ENCODE measurements at regions of chr12 and their contacts with region 1.

Region 1: DNA sequence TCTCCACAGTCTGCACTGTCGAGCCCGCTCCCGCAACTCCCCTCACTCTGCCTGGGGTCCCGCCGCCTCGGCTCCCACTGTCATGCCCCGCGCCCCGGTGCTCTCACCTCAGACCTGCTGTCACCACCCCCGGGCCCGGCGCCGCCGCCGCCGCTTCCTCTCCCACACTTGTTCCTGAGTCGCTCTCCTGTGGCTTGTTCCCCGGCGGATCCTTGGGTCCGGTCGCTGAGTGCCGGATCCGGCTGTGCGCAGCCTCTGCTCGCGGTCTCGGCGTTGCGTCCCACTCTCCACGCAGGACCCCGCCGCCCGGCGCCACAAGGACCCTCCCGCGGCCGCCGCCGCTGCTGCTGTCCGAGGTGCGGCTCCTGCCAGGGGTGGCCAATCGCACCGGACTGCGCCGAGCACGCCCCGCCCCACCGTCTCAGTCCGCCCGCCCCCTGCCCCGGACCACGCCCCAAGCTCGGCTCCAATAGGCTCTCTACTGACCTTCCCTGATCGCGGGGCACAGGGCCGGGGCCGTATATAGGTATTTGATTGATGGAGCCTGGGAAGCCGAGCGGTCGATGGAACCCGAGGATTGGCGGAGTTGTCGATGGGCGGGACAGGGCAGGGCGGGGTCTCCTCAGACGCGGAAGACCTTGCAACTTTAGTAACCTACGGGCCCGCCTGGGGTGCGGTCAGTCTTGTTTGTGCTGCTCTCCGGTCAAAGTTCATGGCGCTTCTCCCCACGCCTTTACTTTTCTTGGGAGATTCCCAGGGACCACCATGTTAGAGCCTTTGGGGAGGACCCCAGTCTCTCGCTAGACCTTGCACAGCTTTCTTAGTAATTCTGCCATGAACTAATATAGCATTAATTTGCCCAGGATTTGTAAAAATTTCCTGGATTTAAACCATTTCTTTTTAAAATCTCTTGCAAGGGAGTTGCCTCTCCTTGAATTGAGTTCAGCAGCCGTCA is at the start of gene TAOK3:
- DNase-seq: peak; percentile 98
- H3K4me3 Mint-ChIP-seq: peak within 1 kb of the TSS; percentile 98
- H3K27ac Mint-ChIP-seq: peak within 1 kb of the TSS; percentile 99
- H3K4me1 Mint-ChIP-seq: peaks cover 14% of the 10 kb centered on the region
- H3K27me3 Mint-ChIP-seq: no peaks in the 10 kb centered on the region
- CTCF ChIP-seq: no peak
- total RNA-seq, gene TAOK3: 24.8 and 28.6 TPM in 2 replicates

Region 2: DNA sequence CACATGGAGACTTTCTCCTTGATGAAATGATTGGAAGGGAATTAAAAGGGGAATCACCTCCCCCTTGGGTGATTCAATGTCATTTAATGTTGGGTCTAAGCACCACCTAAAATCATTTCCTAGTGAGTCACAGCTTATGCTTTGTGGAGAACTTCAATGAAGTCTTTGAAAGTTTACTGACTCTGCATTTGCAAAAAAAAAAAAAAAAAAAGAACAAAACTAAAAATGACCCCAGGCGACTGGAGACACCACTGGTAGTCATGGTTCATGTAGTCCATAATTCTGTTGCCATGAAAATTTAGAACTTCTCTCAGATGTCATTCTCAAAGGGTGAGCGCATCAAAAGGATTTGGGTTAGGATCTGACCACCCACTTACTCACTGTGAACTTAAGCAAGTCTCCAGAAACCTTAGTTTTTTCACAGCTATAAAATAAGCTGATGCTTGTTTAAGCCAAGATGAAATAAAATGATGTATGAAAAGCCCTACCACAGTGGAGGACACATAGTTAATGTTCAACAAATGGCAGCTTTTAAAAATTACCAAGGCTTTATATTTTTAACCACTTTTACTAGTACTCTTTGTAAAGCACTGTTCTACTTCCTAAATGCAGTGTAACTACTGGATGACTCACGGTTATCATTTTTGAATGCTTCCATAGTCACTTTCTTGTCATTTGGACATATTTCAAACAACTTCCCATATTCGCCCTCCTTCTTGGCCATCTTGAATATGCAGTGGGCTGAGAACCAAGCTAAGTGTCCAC is 385.9 kb before region 1 on chr12:
- CTCF ChIA-PET with region 1: no interaction called
- POLR2A ChIA-PET with region 1: no interaction called
- intact Hi-C with region 1: no loop called
- DNase-seq: peak; percentile 54
- H3K4me3 Mint-ChIP-seq: no peak overlapping the region
- H3K27ac Mint-ChIP-seq: no peak overlapping the region
- H3K4me1 Mint-ChIP-seq: no peaks in the 10 kb centered on the region
- H3K27me3 Mint-ChIP-seq: no peaks in the 10 kb centered on the region
- CTCF ChIP-seq: no peak

Region 3: GRCh38 chr12:118109088-118109487 is 263.7 kb before region 1 on chr12:
- CTCF ChIA-PET with region 1: interaction called, 10 read pairs
- POLR2A ChIA-PET with region 1: interaction called, 3 read pairs
- intact Hi-C with region 1: no loop called
- DNase-seq: no peak
- H3K4me3 Mint-ChIP-seq: no peak overlapping the region
- H3K27ac Mint-ChIP-seq: no peak overlapping the region
- H3K4me1 Mint-ChIP-seq: no peaks in the 10 kb centered on the region
- H3K27me3 Mint-ChIP-seq: no peaks in the 10 kb centered on the region
- CTCF ChIP-seq: no peak

Region 4: DNA sequence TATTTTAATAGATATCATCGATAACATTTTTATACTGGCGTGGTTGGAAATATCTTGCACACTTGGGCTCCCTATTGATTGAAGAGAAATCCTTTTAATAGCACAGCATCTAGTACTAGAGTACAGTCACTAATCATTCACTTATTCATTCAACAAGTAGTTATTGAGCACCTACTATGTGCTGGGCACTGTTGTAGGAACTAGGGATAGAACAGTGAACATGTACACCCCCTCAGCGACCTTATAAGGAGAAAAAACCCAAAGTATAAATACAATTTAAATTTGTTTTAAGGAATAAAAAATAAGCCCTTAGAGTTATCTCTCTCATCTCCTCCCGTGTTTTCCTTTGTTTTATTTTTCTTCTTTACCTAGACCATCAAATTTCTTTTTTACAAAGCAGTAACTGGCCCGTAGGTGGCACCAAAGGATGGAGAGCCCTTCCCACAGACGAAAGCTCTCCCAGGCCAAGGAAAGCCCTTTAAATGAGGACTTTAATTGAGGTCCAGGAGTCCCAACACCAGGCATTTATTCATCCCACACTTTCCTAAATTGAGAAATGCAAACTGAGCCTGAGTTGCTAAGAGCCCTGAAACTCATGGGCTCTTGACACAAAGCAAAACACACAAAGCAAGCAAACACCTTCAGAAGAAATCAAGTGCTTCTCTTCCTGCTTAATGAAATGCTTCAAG is 207.9 kb before region 1 on chr12:
- CTCF ChIA-PET with region 1: interaction called, 138 read pairs
- POLR2A ChIA-PET with region 1: interaction called, 22 read pairs
- intact Hi-C with region 1: loop called (anchors 1 kb)
- DNase-seq: peak; percentile 40
- H3K4me3 Mint-ChIP-seq: no peak overlapping the region
- H3K27ac Mint-ChIP-seq: no peak overlapping the region
- H3K4me1 Mint-ChIP-seq: no peaks in the 10 kb centered on the region
- H3K27me3 Mint-ChIP-seq: no peaks in the 10 kb centered on the region
- CTCF ChIP-seq: peak; percentile 59

Region 5: DNA sequence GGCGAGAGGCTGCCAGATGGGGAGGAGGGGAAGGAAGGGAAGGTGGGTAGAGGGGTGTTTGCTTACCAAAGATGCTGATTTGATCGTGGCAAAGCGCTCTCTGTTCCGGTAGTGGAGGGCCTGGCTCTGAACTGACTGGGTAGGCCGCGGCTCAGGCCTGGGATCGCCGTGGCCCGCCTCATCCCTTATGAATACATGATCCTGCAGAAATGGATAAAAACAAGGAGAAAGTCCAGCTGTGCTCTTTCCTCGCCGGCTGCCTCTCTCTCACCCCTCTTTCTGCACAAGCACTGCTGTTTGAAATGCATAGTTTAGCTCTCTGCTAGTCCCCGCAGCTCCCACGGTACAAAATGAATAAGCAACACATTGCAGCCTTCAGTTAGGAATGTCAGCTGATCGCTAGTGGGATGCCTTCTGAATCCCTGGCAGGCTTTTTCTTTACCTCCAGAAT is 183.1 kb before region 1 on chr12:
- CTCF ChIA-PET with region 1: interaction called, 422 read pairs
- POLR2A ChIA-PET with region 1: interaction called, 89 read pairs
- intact Hi-C with region 1: no loop called
- DNase-seq: no peak
- H3K4me3 Mint-ChIP-seq: no peak overlapping the region
- H3K27ac Mint-ChIP-seq: peak overlapping the region; percentile 63
- H3K4me1 Mint-ChIP-seq: peaks cover 24% of the 10 kb centered on the region
- H3K27me3 Mint-ChIP-seq: no peaks in the 10 kb centered on the region
- CTCF ChIP-seq: no peak

Region 6: DNA sequence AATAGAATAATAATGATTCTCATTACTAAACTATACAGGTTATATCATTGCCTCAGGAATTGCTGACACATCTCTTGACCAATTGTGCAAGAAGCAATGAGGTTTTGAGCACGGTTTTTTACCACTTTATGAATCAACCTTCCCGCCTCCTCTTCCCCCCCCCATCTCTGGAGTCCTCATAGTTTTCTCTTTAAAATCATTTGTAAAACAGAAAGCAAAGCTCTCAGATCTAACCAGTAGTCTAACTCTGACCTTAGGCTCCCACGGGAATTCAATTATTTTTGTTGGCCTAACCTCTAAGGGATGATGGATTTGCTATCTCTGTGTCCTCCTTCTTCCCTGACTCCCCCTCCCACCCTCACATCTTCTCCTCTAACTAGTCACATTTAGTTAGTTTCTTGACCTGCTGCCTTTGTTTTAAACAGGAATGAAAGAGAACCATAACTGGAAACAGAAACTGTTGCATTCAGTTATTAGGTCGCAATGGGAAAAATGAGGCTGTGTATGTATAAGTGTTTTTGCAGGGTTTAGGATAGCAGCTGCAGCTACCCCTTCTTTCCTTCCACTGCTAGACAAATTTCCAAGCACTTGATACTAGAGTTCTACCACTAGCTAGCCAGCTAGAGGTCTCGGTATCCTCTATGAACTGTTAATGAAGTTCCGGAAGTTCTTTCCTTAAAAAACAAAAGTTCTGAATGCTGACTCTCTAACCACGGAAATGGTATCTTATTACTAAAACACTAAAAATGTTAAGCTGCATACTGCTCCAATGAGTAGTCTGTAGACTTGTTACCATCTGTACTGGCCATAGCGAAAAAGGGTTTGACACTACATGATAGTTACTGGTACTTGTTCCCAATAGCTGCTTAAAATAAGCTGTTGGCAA is 65.5 kb before region 1 on chr12:
- CTCF ChIA-PET with region 1: interaction called, 11 read pairs
- POLR2A ChIA-PET with region 1: interaction called, 20 read pairs
- intact Hi-C with region 1: loop called (anchors 1 kb)
- DNase-seq: peak; percentile 90
- H3K4me3 Mint-ChIP-seq: peak overlapping the region; percentile 63
- H3K27ac Mint-ChIP-seq: peak overlapping the region; percentile 80
- H3K4me1 Mint-ChIP-seq: peaks cover 22% of the 10 kb centered on the region
- H3K27me3 Mint-ChIP-seq: no peaks in the 10 kb centered on the region
- CTCF ChIP-seq: no peak

Region 7: DNA sequence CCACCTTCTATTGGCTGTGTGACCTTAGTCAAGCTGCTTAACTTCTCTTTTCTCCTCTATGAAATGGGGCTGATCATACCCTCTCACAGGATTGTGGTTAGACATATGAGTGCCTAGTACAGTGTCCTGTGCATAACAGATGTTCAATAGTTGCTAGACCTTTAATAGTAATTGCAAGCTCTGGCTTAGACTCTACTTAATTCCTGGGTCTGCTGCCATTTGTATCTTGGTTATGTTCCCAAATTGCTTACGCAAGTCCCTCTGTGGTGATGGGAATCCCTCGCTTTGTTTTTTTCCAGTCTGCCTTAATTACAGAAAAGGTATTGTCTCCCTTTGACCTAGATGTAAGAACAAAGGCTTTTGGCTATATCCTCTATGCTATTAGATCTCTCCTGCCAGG is 18.6 kb after region 1 on chr12:
- CTCF ChIA-PET with region 1: interaction called, 62 read pairs
- POLR2A ChIA-PET with region 1: interaction called, 5 read pairs
- intact Hi-C with region 1: no loop called
- DNase-seq: no peak
- H3K4me3 Mint-ChIP-seq: no peak overlapping the region
- H3K27ac Mint-ChIP-seq: no peak overlapping the region
- H3K4me1 Mint-ChIP-seq: no peaks in the 10 kb centered on the region
- H3K27me3 Mint-ChIP-seq: no peaks in the 10 kb centered on the region
- CTCF ChIP-seq: no peak

Region 8: DNA sequence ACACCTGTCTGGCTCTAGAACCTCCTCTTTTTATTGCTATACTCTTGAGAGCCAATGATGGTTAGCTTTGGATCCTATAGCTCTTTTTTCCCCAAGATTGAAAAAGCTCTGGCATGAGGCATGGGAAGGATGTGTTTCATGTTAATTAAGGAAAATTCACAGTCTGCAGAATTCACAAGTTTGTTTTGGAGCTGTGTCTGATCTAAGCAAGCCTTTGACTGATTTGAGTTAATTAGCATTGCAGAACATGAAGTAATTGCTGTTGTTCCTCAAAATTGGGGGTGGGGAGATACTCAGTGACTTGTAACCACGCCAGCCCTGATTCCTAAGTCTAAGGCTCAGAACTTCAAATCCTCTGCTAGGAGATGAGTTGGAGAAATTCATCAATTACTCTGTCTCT is 208.6 kb after region 1 on chr12:
- CTCF ChIA-PET with region 1: no interaction called
- POLR2A ChIA-PET with region 1: no interaction called
- intact Hi-C with region 1: no loop called
- DNase-seq: no peak
- H3K4me3 Mint-ChIP-seq: no peak overlapping the region
- H3K27ac Mint-ChIP-seq: no peak overlapping the region
- H3K4me1 Mint-ChIP-seq: no peaks in the 10 kb centered on the region
- H3K27me3 Mint-ChIP-seq: no peaks in the 10 kb centered on the region
- CTCF ChIP-seq: no peak